Lower leg skin (tissue), 4 donors: ENCODE measurements at regions of chr11 and their contacts with region 1.

Region 1: GRCh38 chr11:108084811-108085210 is 36.6 kb upstream of the ACAT1 start:
- DNase-seq: no peak
- H3K4me3 ChIP-seq: no peak overlapping the region
- CTCF ChIP-seq: no peak
- POLR2A ChIP-seq: no peak

Region 2: GRCh38 chr11:108032800-108033199 is 52.0 kb before region 1 on chr11:
- intact Hi-C with region 1: loop called (anchors 5 kb)
- DNase-seq: no peak
- H3K4me3 ChIP-seq: no peak overlapping the region
- CTCF ChIP-seq: no peak
- POLR2A ChIP-seq: no peak

Region 3: GRCh38 chr11:108432783-108433182 is 348.0 kb after region 1 on chr11:
- intact Hi-C with region 1: no loop called
- DNase-seq: no peak
- H3K4me3 ChIP-seq: no peak overlapping the region
- CTCF ChIP-seq: no peak
- POLR2A ChIP-seq: no peak